Endothelial cell of umbilical vein (primary cell): ENCODE measurements at regions of chr2 and their contacts with region 1.

Region 1: DNA sequence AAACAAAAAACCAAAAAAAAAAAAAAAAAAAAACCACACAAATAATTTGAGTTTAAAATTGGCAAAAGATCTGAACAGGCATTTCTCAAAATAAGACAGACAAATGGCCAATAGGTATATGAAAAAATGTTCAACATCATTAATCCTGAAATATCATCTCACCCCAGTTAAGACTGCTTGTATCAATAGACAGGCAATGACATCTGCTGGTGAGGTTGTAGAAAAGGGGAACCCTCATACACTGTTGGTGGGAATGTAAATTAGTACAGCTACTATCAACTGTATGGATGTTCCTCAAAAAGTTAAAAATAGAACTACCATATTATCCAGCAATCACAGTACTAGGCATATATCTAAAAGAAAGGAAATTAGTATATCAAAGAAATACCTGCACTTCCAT is 523.1 kb downstream of the XIRP2 start:
- DNase-seq: no peak
- H3K4me3 ChIP-seq: no peak overlapping the region
- H3K27ac ChIP-seq: no peak overlapping the region
- H3K4me1 ChIP-seq: no peaks in the 10 kb centered on the region
- H3K27me3 ChIP-seq: no peaks in the 10 kb centered on the region
- CTCF ChIP-seq: no peak
- POLR2A ChIP-seq: no peak

Region 2: DNA sequence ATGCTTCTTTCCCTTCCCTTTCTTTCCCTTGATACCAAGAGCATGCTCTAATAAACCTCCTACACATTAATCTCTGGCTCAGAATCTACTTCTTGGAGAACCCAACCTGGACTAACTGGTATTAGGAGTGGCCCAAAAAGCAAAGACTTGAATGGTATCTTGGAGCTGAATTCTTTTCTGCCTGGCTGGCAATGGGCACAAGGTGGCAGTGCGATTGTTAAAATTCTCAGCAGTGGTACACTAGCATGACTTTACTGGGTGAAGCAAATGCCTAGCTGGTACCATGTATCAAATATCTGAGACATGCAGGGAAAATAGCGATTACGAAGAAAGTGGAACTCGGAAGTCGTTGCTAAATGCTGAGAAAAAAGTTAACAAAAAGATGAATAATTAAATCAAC is 147.0 kb before region 1 on chr2:
- CTCF ChIA-PET with region 1: interaction called, 10 read pairs
- POLR2A ChIA-PET with region 1: no interaction called
- dilution Hi-C with region 1: no loop called
- intact Hi-C with region 1: no loop called
- DNase-seq: peak; percentile 25
- H3K4me3 ChIP-seq: no peak overlapping the region
- H3K27ac ChIP-seq: no peak overlapping the region
- H3K4me1 ChIP-seq: no peaks in the 10 kb centered on the region
- H3K27me3 ChIP-seq: no peaks in the 10 kb centered on the region
- CTCF ChIP-seq: no peak
- POLR2A ChIP-seq: no peak

Region 3: GRCh38 chr2:167440382-167440781 is 29.0 kb after region 1 on chr2:
- CTCF ChIA-PET with region 1: no interaction called
- POLR2A ChIA-PET with region 1: no interaction called
- dilution Hi-C with region 1: no loop called
- intact Hi-C with region 1: no loop called
- DNase-seq: no peak
- H3K4me3 ChIP-seq: no peak overlapping the region
- H3K27ac ChIP-seq: no peak overlapping the region
- H3K4me1 ChIP-seq: peaks cover 2% of the 10 kb centered on the region
- H3K27me3 ChIP-seq: no peaks in the 10 kb centered on the region
- CTCF ChIP-seq: no peak
- POLR2A ChIP-seq: no peak